A549 (cell line): ENCODE measurements at regions of chr6 and their contacts with region 1.

Region 1: GRCh38 chr6:24743265-24743943 is 24.4 kb upstream of the C6orf62 start:
- DNase-seq: peak; percentile 80 to 82
- ATAC-seq: peak; percentile 97 to 98
- H3K4me3 ChIP-seq: no peak overlapping the region
- H3K27ac ChIP-seq: peak overlapping the region; percentile 78 to 83
- H3K4me1 ChIP-seq: peaks cover 19% of the 10 kb centered on the region
- CTCF ChIP-seq: no peak
- EP300 ChIP-seq: no peak
- POLR2A ChIP-seq: no peak
- RAD21 ChIP-seq: no peak

Region 2: DNA sequence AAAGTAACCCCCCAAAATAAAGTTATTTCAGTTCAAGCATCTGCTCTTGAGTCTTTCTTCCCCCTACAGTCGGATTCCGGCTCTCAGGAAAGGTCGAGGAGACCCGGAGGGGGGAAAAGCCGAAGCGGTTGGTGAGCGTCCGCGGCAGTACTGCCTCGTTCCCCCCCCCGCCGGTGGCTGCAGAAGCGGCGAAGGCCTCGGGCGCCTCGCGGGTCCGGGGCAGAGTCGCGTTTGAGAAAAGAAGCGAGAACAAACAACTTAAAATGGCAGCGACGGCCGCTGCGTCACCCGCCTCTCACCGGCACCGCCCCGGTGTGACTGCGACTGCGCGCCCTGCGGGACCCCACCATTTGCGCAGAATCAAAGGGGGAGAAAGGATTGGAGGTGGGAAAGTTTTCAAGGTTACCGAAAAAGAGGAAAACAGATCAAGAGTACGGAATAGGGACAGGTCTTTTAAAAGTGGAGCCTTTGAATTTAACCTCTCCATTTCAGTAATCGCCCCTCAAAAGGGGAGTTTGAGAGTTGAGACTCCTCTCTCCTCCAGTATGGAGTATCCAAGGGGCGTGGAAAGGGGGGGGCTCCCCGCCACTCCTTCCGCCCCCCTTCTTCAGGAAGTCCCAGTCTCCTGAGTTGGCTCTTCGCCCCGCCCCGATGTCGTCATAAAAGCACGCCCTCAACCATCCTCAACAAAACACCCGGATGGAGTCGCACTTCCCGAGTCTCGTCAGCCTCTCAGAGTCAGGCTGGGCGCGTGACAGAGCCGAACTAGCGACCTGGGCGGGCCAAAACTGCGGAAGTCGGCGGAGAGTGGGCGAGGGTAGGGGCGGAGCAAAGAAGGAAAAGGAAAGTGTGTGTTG is 22.6 kb before region 1 on chr6:
- CTCF ChIA-PET with region 1: interaction called, 5 read pairs
- POLR2A ChIA-PET with region 1: interaction called, 30 read pairs
- DNase-seq: peak; percentile 93 to 99
- ATAC-seq: peak; percentile 92 to 96
- H3K4me3 ChIP-seq: peak overlapping the region; percentile 99
- H3K27ac ChIP-seq: peak overlapping the region; percentile 99
- H3K4me1 ChIP-seq: peaks cover 25% of the 10 kb centered on the region
- CTCF ChIP-seq: no peak
- EP300 ChIP-seq: no peak
- POLR2A ChIP-seq: peak; percentile 91
- RAD21 ChIP-seq: no peak

Region 3: GRCh38 chr6:25035527-25036435 is 292.4 kb after region 1 on chr6:
- CTCF ChIA-PET with region 1: no interaction called
- POLR2A ChIA-PET with region 1: no interaction called
- DNase-seq: no peak
- ATAC-seq: no peak
- H3K4me3 ChIP-seq: no peak overlapping the region
- H3K27ac ChIP-seq: no peak overlapping the region
- H3K4me1 ChIP-seq: no peaks in the 10 kb centered on the region
- CTCF ChIP-seq: no peak
- EP300 ChIP-seq: no peak
- POLR2A ChIP-seq: no peak
- RAD21 ChIP-seq: no peak